ENCODE measurements at regions of chr14 and their contacts with region 1.

Region 1: DNA sequence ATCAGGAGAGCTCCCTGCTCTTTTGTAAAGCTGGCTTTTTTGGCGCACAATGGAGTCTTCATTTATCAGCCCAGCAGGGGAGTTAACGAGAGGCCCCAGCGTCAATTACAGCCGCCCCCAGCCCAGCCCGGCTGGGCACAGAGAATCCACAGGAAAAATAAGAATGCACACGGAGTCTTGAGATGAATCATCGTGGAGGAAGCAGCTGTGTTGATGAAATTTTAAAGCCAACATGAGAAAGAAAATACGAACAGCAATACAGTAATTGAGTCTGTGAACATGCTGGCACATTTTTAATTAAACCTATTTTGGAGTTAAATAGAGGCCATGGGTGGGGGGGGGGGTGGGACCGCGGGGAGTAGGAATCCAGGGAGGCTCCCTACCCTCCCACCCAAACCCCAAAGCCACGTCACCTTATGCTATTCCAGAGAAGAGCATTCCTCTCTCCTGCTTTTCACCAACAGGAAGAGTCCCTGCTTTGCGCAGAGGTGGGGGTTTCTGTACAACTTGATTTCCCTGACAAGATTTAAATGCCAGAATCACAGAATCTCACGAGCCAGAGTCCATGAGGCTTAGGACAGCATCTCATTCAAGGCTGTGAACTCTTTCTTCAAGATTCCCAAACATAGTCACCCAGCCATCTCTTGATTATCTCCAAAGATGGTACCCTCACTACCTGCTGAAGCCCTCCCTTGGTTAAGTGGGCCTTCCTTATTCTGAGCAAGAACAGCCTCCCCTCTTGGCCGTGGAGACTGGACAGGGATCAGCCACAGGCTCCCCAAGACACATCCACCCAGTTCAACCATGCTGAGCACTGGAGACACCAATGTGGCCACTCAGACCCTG is 50.3 kb downstream of the CCNK start:
- DNase-seq: peak; percentile 81
- ATAC-seq: peak; percentile 72
- H3K4me3 ChIP-seq: no peak overlapping the region
- H3K27ac ChIP-seq: peak overlapping the region; percentile 62
- H3K4me1 ChIP-seq: peaks cover 25% of the 10 kb centered on the region
- H3K27me3 ChIP-seq: no peaks in the 10 kb centered on the region
- CTCF ChIP-seq: no peak
- POLR2A ChIP-seq: no peak
- RAD21 ChIP-seq: no peak

Region 2: GRCh38 chr14:99568567-99569560 is 37.4 kb after region 1 on chr14:
- CTCF ChIA-PET with region 1: no interaction called
- POLR2A ChIA-PET with region 1: no interaction called
- dilution Hi-C with region 1: no loop called
- in situ Hi-C with region 1: no loop called
- intact Hi-C with region 1: loop called (anchors 5 kb)
- DNase-seq: peak; percentile 63
- ATAC-seq: peak; percentile 50
- H3K4me3 ChIP-seq: no peak overlapping the region
- H3K27ac ChIP-seq: no peak overlapping the region
- H3K4me1 ChIP-seq: peaks cover 44% of the 10 kb centered on the region
- H3K27me3 ChIP-seq: no peaks in the 10 kb centered on the region
- CTCF ChIP-seq: no peak
- POLR2A ChIP-seq: no peak
- RAD21 ChIP-seq: no peak

Region 3: DNA sequence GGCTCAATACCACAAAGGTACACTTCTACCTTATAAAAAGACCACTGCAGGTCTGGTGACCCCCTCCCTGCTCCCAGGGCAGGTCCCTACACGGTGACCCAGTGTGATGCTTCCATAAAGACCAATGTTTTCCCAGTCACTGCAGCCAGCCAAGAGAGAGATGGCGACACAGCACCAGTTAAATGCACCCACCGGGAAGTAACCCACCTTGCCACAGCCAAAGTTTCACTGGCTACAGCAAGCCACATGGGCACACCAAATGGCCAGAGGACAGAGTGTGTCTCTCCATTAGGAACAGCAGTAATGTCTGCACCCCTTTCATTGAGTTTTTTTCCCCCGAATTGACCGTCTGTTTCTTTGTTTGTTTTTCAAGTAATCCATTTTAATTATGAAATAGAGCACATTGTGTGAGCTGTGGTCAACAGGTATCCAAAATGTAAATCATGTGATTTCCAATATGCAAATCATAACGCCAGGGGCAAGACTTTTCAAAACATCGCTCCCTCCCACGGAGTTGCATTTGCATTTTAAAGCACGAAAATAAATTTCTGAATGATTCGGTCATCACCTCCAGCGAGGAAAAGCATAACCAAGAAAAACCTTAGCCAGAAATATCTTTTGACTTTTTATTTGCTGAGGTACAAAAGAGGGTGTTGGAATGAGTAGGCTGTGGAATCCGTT is 212.9 kb after region 1 on chr14:
- CTCF ChIA-PET with region 1: no interaction called
- POLR2A ChIA-PET with region 1: interaction called, 14 read pairs
- dilution Hi-C with region 1: no loop called
- in situ Hi-C with region 1: no loop called
- intact Hi-C with region 1: no loop called
- DNase-seq: peak; percentile 67
- ATAC-seq: peak; percentile 21
- H3K4me3 ChIP-seq: no peak overlapping the region
- H3K27ac ChIP-seq: peak overlapping the region; percentile 86
- H3K4me1 ChIP-seq: peaks cover 18% of the 10 kb centered on the region
- H3K27me3 ChIP-seq: no peaks in the 10 kb centered on the region
- CTCF ChIP-seq: 0 out of 2 replicates have a peak, but pooled peaks have one; percentile 22
- POLR2A ChIP-seq: no peak; the same call in 1 of the 2 replicates
- RAD21 ChIP-seq: peak; percentile 9; the same call in 1 of the 2 replicates